CD4-positive, alpha-beta T cell (primary cell): ENCODE measurements at regions of chr7 and their contacts with region 1.

Region 1: DNA sequence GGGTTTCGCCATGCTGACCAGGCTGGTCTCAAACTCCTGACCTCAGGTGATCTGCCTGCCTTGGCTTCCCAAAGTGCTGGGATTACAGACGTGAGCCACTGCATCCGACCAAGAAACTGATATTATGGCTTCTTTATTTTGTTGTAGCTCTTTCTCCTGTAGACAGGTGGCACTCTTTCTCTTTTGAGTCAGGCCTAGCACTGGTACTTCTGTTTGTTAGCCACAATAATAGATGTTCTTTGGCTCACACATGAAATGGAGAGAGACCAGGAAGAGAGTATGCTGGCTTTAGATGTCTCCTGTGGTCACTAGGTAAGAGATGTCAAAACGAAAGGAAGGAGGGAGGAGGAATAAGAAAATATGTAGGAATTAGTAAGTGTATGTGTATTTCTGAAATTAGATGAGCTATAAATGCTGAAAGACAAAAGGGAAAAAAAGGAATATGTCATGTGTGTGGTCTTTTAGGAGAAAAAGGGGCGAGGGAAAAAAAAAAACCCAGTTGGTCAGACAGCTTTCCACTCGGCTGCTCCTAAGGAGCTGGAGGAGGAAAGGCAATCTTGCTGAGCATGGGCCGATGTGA is 78.7 kb downstream of the CLEC2L start:
- DNase-seq: peak in 3 of 14 experiments; percentile 40 to 53 (median 51)
- ATAC-seq: peak; percentile 78
- H3K4me3 ChIP-seq: no peak overlapping the region
- H3K4me3 Mint-ChIP-seq: no peak overlapping the region
- H3K27ac ChIP-seq: no peak overlapping the region
- H3K27ac Mint-ChIP-seq: no peak overlapping the region
- H3K4me1 ChIP-seq: no peaks in the 10 kb centered on the region
- H3K4me1 Mint-ChIP-seq: no peaks in the 10 kb centered on the region
- H3K27me3 ChIP-seq: no peaks in the 10 kb centered on the region
- H3K27me3 Mint-ChIP-seq: no peaks in the 10 kb centered on the region
- CTCF ChIP-seq: peak; percentile 70

Region 2: DNA sequence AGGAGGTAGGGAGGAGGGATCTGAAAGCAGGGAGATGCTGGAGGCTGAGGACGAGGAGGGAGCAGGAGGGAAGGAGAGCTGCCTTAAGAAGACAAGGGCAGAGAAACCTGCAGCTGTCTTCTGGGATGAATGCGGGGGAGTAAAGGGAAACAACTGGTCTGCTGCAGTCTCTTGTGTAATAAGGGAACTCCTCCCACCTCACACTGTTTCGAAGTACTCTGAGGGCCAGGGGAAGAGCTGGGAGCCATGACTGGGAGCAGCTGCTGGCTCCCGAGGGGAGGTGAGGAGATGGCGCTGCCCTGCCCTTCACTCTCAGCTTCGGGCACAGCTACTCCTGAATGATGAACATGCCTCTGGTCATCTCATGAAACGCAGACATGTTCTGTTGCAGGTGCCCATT is 13.6 kb before region 1 on chr7:
- CTCF ChIA-PET with region 1: interaction called, 10 read pairs
- POLR2A ChIA-PET with region 1: no interaction called
- intact Hi-C with region 1: no loop called
- DNase-seq: no peak
- ATAC-seq: no peak
- H3K4me3 ChIP-seq: no peak overlapping the region
- H3K4me3 Mint-ChIP-seq: no peak overlapping the region
- H3K27ac ChIP-seq: no peak overlapping the region
- H3K27ac Mint-ChIP-seq: no peak overlapping the region
- H3K4me1 ChIP-seq: no peaks in the 10 kb centered on the region
- H3K4me1 Mint-ChIP-seq: peaks cover 5% of the 10 kb centered on the region
- H3K27me3 ChIP-seq: no peaks in the 10 kb centered on the region
- H3K27me3 Mint-ChIP-seq: no peaks in the 10 kb centered on the region
- CTCF ChIP-seq: no peak

Region 3: GRCh38 chr7:139714163-139714901 is 112.1 kb after region 1 on chr7:
- CTCF ChIA-PET with region 1: no interaction called
- POLR2A ChIA-PET with region 1: no interaction called
- intact Hi-C with region 1: no loop called
- DNase-seq: no peak
- ATAC-seq: no peak
- H3K4me3 ChIP-seq: no peak overlapping the region
- H3K4me3 Mint-ChIP-seq: no peak overlapping the region
- H3K27ac ChIP-seq: no peak overlapping the region
- H3K27ac Mint-ChIP-seq: no peak overlapping the region
- H3K4me1 ChIP-seq: no peaks in the 10 kb centered on the region
- H3K4me1 Mint-ChIP-seq: peaks cover 10% of the 10 kb centered on the region
- H3K27me3 ChIP-seq: no peaks in the 10 kb centered on the region
- H3K27me3 Mint-ChIP-seq: no peaks in the 10 kb centered on the region
- CTCF ChIP-seq: no peak

Region 4: GRCh38 chr7:140304191-140304799 is 702.1 kb after region 1 on chr7:
- CTCF ChIA-PET with region 1: no interaction called
- POLR2A ChIA-PET with region 1: no interaction called
- intact Hi-C with region 1: loop called in 1 of 2 experiments (anchors 10 kb)
- DNase-seq: peak in 13 of 14 experiments; percentile 7 to 79 (median 34)
- ATAC-seq: peak; percentile 95
- H3K4me3 ChIP-seq: no peak overlapping the region
- H3K4me3 Mint-ChIP-seq: no peak overlapping the region
- H3K27ac ChIP-seq: no peak overlapping the region
- H3K27ac Mint-ChIP-seq: peak overlapping the region; percentile 21
- H3K4me1 ChIP-seq: peaks cover 4% of the 10 kb centered on the region
- H3K4me1 Mint-ChIP-seq: peaks cover 6% of the 10 kb centered on the region
- H3K27me3 ChIP-seq: no peaks in the 10 kb centered on the region
- H3K27me3 Mint-ChIP-seq: no peaks in the 10 kb centered on the region
- CTCF ChIP-seq: peak; percentile 66